ENCODE measurements at regions of chr10 and their contacts with region 1.

Region 1: DNA sequence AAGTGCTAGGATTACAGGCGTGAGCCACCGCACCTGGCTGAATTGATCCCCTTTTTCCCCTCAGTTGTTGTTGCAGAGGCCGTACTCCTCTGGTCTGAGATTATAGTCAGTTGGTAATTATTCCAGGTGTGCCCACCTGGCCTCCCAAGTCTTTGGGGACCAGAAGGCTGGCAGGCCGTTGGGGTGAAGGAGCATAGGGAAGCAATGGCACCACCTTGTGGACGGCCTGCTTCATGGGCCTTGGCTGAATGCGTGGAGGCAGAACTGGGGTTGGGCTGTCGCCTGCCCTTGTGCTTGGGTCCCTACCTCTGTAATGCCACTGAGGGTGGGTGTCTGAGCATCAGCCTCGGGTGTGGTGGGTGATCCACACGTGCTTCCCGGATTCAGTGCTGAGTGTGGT is 125.7 kb downstream of the RGS10 start:
- DNase-seq: peak; percentile 18 to 92 (median 52)

Region 2: GRCh38 chr10:119199231-119199992 is 217.4 kb before region 1 on chr10:
- intact Hi-C with region 1: loop called (anchors 2 kb)
- DNase-seq: peak in 9 of 10 donors; percentile 40 to 94 (median 64)